K562 (cell line): ENCODE measurements at regions of chr2 and their contacts with region 1.

Region 1: DNA sequence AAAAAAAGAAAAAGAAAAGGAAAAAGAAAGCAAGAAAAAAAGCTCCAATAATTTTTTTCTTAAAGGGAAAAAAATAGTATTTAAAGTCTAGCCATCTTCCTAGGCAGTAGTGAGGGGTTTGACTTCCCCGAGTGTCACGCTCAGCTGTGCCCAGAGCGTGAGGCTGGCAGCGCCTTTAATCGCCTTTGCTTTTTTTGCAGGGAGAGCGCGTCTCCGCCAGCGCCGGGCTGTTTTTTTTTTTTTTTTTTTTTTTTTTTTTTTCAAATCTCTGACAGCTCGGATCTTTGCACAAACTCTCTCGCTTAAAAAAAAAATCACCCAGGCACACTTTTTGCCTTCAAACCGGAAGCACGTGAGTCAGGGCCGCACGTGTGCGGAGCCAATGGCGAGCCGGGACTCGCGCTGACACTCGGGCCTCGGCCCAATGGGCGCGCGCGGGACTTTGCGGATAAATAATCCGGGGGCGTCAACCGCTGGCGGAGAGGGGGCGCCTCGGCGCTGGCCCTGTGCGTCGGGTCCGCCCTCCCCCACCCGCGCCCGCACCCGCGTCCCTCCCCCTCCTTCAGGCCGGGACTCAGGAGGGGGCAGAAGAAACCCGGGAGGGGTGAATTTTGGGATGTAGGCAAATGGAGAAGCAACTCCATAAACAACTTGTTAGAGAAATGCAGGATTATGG is at the start of gene EN1:
- DNase-seq: peak; percentile 78 to 91 (median 88)
- ATAC-seq: peak; percentile 88
- H3K4me3 ChIP-seq: peak within 1 kb of the TSS; percentile 38
- H3K27ac ChIP-seq: no peak within 1 kb of the TSS
- H3K4me1 ChIP-seq: peaks cover 6 to 32% of the 10 kb centered on the region in 2 experiments; a peak in 4 of 5 replicates
- H3K27me3 ChIP-seq: peaks cover 17 to 28% of the 10 kb centered on the region in 2 experiments; a peak in 4 of 5 replicates
- CTCF ChIP-seq: no peak
- EP300 ChIP-seq: no peak
- POLR2A ChIP-seq: no peak
- RAD21 ChIP-seq: no peak
- polyA plus RNA-seq, gene EN1: 0.06 to 0.10 TPM

Region 2: DNA sequence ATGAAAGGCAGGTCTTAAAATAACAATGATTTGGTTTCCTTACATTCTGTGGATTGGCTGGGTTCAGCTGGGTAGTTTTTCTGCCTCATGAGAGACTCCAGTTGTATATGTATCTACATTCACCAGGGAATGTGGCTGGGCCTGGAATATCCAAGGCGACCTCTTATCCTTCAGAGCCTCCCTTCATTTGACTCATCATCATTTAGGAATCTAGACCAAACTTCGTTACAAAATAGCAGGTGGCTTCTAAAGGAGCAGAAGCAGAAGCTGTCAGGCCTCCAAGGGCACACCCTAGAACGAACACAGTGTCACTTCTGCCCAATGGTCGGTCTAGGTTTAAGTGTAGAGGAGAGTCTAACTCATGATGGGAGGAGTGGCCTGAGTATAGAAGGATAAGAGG is 204.3 kb before region 1 on chr2:
- CTCF ChIA-PET with region 1: no interaction called
- POLR2A ChIA-PET with region 1: no interaction called
- in situ Hi-C with region 1: loop called (anchors 10 kb)
- intact Hi-C with region 1: no loop called
- DNase-seq: no peak
- ATAC-seq: no peak
- H3K4me3 ChIP-seq: no peak overlapping the region
- H3K27ac ChIP-seq: no peak overlapping the region
- H3K4me1 ChIP-seq: no peaks in the 10 kb centered on the region
- H3K27me3 ChIP-seq: no peaks in the 10 kb centered on the region
- CTCF ChIP-seq: no peak
- EP300 ChIP-seq: no peak
- POLR2A ChIP-seq: no peak
- RAD21 ChIP-seq: no peak

Region 3: GRCh38 chr2:118763797-118764196 is 83.8 kb before region 1 on chr2:
- CTCF ChIA-PET with region 1: no interaction called
- POLR2A ChIA-PET with region 1: no interaction called
- in situ Hi-C with region 1: no loop called
- intact Hi-C with region 1: loop called (anchors 10 kb)
- DNase-seq: peak in 2 of 4 experiments; percentile 28 to 30
- ATAC-seq: peak; percentile 64
- H3K4me3 ChIP-seq: no peak overlapping the region
- H3K27ac ChIP-seq: no peak overlapping the region
- H3K4me1 ChIP-seq: no peaks in the 10 kb centered on the region
- H3K27me3 ChIP-seq: no peaks in the 10 kb centered on the region; a peak in 1 of 5 replicates
- CTCF ChIP-seq: peak in 2 of 3 experiments; percentile 38 to 43; a peak in 4 of 6 replicates
- EP300 ChIP-seq: no peak
- POLR2A ChIP-seq: no peak
- RAD21 ChIP-seq: peak in 1 of 2 experiments; percentile 37; a peak in 2 of 4 replicates

Region 4: DNA sequence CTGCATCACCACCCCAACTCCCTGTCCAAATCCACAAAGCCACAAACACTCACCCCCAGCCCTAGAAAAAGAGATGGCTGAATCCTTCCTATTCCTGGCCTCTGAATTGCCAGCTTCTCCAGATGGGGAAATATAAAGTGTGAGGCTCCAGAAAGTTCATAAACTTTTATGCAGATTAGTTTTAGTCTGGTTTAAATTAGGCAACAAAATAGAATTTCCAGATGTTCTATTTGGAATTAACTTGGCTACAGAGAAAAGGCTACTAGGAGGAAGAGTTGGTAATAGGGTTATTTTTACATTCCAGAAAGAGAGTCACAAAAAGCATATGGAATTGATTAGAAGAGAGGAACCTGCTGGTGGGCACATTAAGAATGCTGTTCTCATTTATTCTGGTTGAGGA is 56.2 kb before region 1 on chr2:
- CTCF ChIA-PET with region 1: no interaction called
- POLR2A ChIA-PET with region 1: no interaction called
- in situ Hi-C with region 1: no loop called
- intact Hi-C with region 1: no loop called
- DNase-seq: no peak
- ATAC-seq: no peak
- H3K4me3 ChIP-seq: no peak overlapping the region
- H3K27ac ChIP-seq: no peak overlapping the region
- H3K4me1 ChIP-seq: no peaks in the 10 kb centered on the region; a peak in 1 of 5 replicates
- H3K27me3 ChIP-seq: 0 out of 5 replicates have a peak, but pooled peaks cover 0 to 4% of the 10 kb centered on the region in 2 experiments
- CTCF ChIP-seq: no peak
- EP300 ChIP-seq: no peak
- POLR2A ChIP-seq: no peak
- RAD21 ChIP-seq: no peak